ENCODE measurements at regions of chr10 and their contacts with region 1.

Region 1: DNA sequence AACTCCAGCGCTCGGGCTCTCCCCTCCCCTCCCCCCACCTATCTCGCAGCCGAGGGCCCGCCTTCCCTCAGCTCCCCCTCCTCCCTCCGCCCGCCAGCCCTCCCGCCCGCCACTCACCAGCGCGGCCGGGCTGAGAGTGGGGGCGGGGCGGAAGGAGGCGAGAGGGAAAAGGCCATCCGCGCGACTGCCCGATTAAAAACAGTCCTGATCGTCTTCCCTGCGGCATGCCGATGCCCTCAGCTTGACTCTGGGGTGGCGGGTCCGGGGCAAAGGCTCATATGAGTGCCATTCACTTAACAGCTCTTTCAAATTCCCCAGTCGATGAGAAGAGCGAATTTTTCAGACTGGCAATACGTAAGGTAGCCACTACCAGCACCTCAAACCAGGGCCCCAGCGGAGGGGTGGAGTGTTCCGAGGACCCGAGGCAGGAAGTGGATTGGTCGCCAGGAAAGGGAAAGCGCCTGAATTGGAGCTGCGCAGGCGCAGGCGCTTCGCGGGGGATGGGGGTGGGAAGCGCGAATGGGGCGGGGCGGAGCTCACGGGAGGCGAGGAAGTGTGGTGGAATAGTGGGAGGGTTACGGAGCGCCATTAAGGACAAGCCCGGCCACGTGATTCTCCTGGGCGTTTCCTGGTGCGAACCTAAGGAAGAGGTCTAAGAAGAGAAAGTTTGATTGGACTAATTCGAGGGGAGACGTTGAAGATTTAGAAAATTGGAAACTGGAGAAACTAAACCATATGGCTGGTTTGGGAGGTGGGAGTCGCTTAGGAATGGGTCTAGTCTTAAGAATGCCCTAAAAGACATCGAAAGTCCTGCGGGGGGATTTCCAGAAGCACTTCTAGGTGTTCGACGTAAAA is at the start of gene UPF2:
- DNase-seq: peak; percentile 98 to 99 (median 98)
- H3K4me3 ChIP-seq: peak within 1 kb of the TSS; percentile 89
- H3K27ac ChIP-seq: peak within 1 kb of the TSS; percentile 80 to 97
- H3K4me1 ChIP-seq: no peaks in the 10 kb centered on the region
- H3K27me3 ChIP-seq: no peaks in the 10 kb centered on the region
- CTCF ChIP-seq: peak in 1 of 3 donors; percentile 23
- EP300 ChIP-seq: no peak
- POLR2A ChIP-seq: no peak
- total RNA-seq, gene UPF2: 12.5 to 22.9 (median 19.6) TPM

Region 2: GRCh38 chr10:12068449-12069269 is 25.6 kb after region 1 on chr10 and contains the start of gene DHTKD1:
- intact Hi-C with region 1: loop called in 1 of 4 experiments (anchors 1 kb)
- DNase-seq: peak; percentile 98 to 100 (median 99)
- H3K4me3 ChIP-seq: peak within 1 kb of the TSS; percentile 100
- H3K27ac ChIP-seq: peak within 1 kb of the TSS; percentile 37 to 70
- H3K4me1 ChIP-seq: peaks cover 3% of the 10 kb centered on the region
- H3K27me3 ChIP-seq: no peaks in the 10 kb centered on the region
- CTCF ChIP-seq: peak; percentile 42 to 77 (median 51)
- EP300 ChIP-seq: no peak
- POLR2A ChIP-seq: peak; percentile 82
- total RNA-seq, gene DHTKD1: 10.3 to 33.2 (median 26.4) TPM

Region 3: DNA sequence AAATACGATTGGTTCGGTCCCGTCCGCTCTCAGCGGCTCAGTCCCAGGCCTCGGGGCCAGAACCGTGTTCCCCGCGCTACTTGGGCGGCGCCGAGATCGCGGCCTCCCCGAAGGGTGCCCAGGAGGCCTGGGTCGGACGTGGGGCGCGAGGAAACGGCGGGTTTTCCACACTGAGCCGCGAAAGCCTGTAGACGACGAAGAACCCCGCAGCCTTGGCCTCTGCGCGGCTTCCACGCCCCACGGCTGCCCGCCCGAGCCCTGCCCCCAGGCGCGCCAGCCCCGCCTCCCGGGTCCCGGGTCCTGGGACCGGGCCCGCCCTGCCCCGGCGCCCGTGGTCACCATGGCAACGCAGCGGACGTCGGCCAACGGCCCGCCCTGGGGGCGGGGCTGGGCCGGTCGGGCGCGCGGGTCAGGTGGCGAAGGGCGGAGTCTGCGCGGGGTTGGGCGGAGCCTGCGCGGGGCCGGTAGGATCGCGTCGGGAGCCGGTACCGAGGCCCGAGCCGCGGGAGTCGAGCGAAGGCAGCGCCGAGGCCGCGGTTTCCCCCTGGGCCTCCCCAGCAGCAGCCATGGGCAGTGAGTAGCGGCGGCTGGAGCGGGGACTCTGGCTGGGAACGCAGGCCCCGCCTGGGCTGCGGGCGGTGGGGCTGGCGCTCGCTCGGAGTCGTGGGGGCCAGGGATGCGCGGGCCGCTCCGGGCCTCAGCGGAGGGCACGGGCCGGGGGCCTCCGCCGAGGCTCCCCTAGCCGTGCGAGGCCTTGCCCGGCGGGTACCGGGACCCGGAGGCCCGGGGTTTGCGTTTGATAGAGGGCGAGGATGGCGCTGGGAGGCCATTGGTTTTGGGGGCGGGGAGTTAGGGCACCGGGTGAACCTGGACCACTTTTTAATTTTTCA is 86.4 kb after region 1 on chr10 and contains the start of gene SEC61A2:
- intact Hi-C with region 1: loop called in 1 of 4 experiments (anchors 5 kb)
- DNase-seq: peak; percentile 94 to 98 (median 98)
- H3K4me3 ChIP-seq: peak within 1 kb of the TSS; percentile 65
- H3K27ac ChIP-seq: peak within 1 kb of the TSS; percentile 59 to 78
- H3K4me1 ChIP-seq: no peaks in the 10 kb centered on the region
- H3K27me3 ChIP-seq: no peaks in the 10 kb centered on the region
- CTCF ChIP-seq: no peak
- EP300 ChIP-seq: no peak
- POLR2A ChIP-seq: peak; percentile 33
- total RNA-seq, gene SEC61A2: 7.4 to 13.4 (median 9.5) TPM